A549 (cell line): ENCODE measurements at regions of chr9 and their contacts with region 1.

Region 1: GRCh38 chr9:114271641-114272081 is 51.2 kb upstream of the ORM1 start:
- DNase-seq: peak in 1 of 2 experiments; percentile 42
- ATAC-seq: peak in 1 of 2 experiments; percentile 70; a peak in 3 of 6 replicates
- H3K4me3 ChIP-seq: no peak overlapping the region
- H3K27ac ChIP-seq: no peak overlapping the region
- H3K4me1 ChIP-seq: peaks cover 14% of the 10 kb centered on the region
- CTCF ChIP-seq: peak; percentile 41
- EP300 ChIP-seq: no peak
- POLR2A ChIP-seq: no peak
- RAD21 ChIP-seq: peak; percentile 63 to 64

Region 2: GRCh38 chr9:114259798-114260523 is 11.7 kb before region 1 on chr9:
- CTCF ChIA-PET with region 1: interaction called, 16 read pairs
- POLR2A ChIA-PET with region 1: no interaction called
- DNase-seq: no peak
- ATAC-seq: no peak
- H3K4me3 ChIP-seq: no peak overlapping the region
- H3K27ac ChIP-seq: no peak overlapping the region
- H3K4me1 ChIP-seq: no peaks in the 10 kb centered on the region
- CTCF ChIP-seq: no peak
- EP300 ChIP-seq: no peak
- POLR2A ChIP-seq: no peak
- RAD21 ChIP-seq: no peak

Region 3: DNA sequence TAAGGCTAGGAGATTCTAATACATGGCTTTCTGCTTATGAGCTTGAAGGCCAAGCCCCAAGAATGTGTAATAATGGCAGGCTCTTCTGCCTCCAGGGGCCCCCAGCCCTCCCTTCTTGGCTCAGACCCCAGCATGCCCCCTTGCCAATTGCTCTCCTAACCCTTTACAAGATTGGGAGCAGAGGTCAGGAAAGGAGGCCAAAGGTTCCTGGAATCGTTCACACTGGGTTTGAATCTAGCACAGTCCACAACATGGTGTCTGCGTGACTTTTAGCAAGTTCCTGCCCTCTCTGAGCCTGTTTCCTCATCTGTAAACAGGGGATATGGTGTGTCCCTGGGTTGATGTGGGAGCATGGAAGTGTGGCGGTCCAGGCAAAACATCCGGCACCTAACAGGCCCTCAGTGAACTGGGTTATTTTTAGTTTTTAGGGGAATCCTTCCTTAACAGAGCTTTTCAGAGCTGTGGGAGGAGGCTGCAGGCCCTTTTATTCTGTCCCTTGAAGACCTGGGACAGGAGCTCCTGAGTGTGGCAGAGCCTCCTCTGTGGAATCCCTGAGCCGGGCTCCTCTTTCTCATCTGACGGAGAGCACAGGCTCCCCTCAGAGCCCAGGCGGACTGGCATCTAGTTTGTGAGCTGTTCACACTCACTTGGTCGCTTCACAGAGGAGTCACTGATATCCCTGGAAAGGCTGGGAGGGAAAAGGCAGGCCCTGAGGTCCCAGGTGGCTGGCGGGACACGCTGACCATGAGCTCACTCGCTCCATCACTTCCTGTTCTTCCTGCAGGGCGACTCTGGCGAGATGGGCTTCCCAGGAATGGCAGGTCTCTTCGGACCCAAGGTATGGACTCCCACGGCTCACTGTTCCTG is 27.9 kb after region 1 on chr9:
- CTCF ChIA-PET with region 1: no interaction called
- POLR2A ChIA-PET with region 1: no interaction called
- DNase-seq: no peak
- ATAC-seq: no peak
- H3K4me3 ChIP-seq: no peak overlapping the region
- H3K27ac ChIP-seq: no peak overlapping the region
- H3K4me1 ChIP-seq: no peaks in the 10 kb centered on the region
- CTCF ChIP-seq: no peak
- EP300 ChIP-seq: no peak
- POLR2A ChIP-seq: no peak
- RAD21 ChIP-seq: no peak